CD4-positive, alpha-beta memory T cell (primary cell): ENCODE measurements at regions of chr14 and their contacts with region 1.

Region 1: GRCh38 chr14:24114536-24115450 is at the starts of genes DCAF11 and NRL:
- DNase-seq: peak; percentile 100
- H3K4me3 ChIP-seq: peak within 1 kb of the TSS; percentile 97 to 98
- H3K4me3 Mint-ChIP-seq: peak within 1 kb of the TSS; percentile 95 to 99 (median 98)
- H3K27ac ChIP-seq: peak within 1 kb of the TSS; percentile 98
- H3K27ac Mint-ChIP-seq: peak within 1 kb of the TSS; percentile 98 to 100 (median 99)
- H3K4me1 ChIP-seq: peaks cover 29% of the 10 kb centered on the region
- H3K4me1 Mint-ChIP-seq: peaks cover 19 to 44% (median 30%) of the 10 kb centered on the region in 4 donors
- H3K27me3 ChIP-seq: no peaks in the 10 kb centered on the region
- H3K27me3 Mint-ChIP-seq: no peaks in the 10 kb centered on the region
- total RNA-seq, gene DCAF11: 71.5 to 75.8 TPM
- total RNA-seq, gene NRL: 2.9 to 4.5 TPM

Region 2: GRCh38 chr14:24051789-24052655 is 62.8 kb before region 1 on chr14 and contains the start of gene CARMIL3:
- CTCF ChIA-PET with region 1: interaction called, 392 read pairs
- POLR2A ChIA-PET with region 1: interaction called, 21 read pairs
- intact Hi-C with region 1: no loop called
- DNase-seq: peak; percentile 50 to 58 (median 53)
- H3K4me3 ChIP-seq: peak within 1 kb of the TSS in 1 of 2 donors; percentile 76
- H3K4me3 Mint-ChIP-seq: peak within 1 kb of the TSS; percentile 83 to 92 (median 88)
- H3K27ac ChIP-seq: peak within 1 kb of the TSS; percentile 16
- H3K27ac Mint-ChIP-seq: peak within 1 kb of the TSS in 5 of 7 donors; percentile 14 to 81 (median 68)
- H3K4me1 ChIP-seq: peaks cover 14% of the 10 kb centered on the region
- H3K4me1 Mint-ChIP-seq: peaks cover 10 to 17% (median 14%) of the 10 kb centered on the region in 4 donors
- H3K27me3 ChIP-seq: no peaks in the 10 kb centered on the region
- H3K27me3 Mint-ChIP-seq: peaks cover 6 to 8% of the 10 kb centered on the region in 2 donors
- total RNA-seq, gene CARMIL3: 0.15 to 0.22 TPM

Region 3: GRCh38 chr14:24093901-24094761 is 20.7 kb before region 1 on chr14 and contains the start of gene PCK2:
- CTCF ChIA-PET with region 1: interaction called, 412 read pairs
- POLR2A ChIA-PET with region 1: interaction called, 137 read pairs
- intact Hi-C with region 1: loop called (anchors 1 kb)
- DNase-seq: peak; percentile 53 to 75 (median 61)
- H3K4me3 ChIP-seq: peak within 1 kb of the TSS; percentile 82 to 90
- H3K4me3 Mint-ChIP-seq: peak within 1 kb of the TSS; percentile 91 to 100 (median 98)
- H3K27ac ChIP-seq: peak within 1 kb of the TSS; percentile 84
- H3K27ac Mint-ChIP-seq: peak within 1 kb of the TSS; percentile 84 to 98 (median 97)
- H3K4me1 ChIP-seq: peaks cover 26% of the 10 kb centered on the region
- H3K4me1 Mint-ChIP-seq: peaks cover 21 to 47% (median 33%) of the 10 kb centered on the region in 4 donors
- H3K27me3 ChIP-seq: no peaks in the 10 kb centered on the region
- H3K27me3 Mint-ChIP-seq: no peaks in the 10 kb centered on the region
- total RNA-seq, gene PCK2: 18.3 to 21.4 TPM

Region 4: DNA sequence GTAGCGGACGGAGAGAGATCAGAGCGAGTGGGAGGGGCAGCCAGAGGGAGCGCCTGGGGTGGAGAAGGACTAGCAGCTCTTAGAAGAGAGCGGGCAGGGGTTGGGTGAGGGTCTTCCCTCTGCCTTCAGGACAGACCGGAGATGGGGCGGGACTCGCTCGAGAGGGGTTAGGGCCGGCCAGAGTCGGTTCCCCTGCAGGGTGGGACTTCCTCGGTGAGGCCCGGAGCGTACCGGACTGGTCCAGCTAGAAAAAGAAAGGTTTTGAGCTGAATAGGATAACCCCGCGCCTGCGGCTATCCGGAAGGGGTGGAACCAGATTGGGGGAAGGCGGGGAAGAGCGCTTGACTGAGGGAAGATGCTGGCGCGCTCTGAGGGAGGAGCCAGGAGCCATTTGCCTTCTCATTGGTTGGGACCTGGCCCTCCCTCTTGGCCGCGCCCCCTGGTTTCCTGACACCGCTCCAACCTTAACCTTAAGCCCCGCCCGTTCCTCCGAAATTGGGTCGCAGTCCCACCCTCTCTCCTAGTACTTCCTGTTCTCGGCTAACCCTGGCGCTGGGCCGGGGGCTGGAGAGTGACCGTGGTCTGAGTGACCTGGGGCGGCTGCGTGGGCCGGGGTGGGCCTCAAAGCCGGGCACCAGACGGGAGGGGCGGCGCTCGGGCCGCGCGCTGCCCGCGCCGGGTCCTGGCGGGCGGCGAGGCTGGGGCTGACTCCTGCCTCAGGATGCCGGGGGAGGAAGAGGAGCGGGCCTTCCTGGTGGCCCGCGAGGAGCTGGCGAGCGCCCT is 32.4 kb after region 1 on chr14 and contains the start of gene RNF31:
- CTCF ChIA-PET with region 1: interaction called, 36 read pairs
- POLR2A ChIA-PET with region 1: interaction called, 104 read pairs
- intact Hi-C with region 1: loop called (anchors 1 kb)
- DNase-seq: peak; percentile 95 to 99 (median 97)
- H3K4me3 ChIP-seq: peak within 1 kb of the TSS; percentile 85 to 99
- H3K4me3 Mint-ChIP-seq: peak within 1 kb of the TSS; percentile 97 to 100 (median 98)
- H3K27ac ChIP-seq: peak within 1 kb of the TSS; percentile 92
- H3K27ac Mint-ChIP-seq: peak within 1 kb of the TSS; percentile 95 to 99 (median 98)
- H3K4me1 ChIP-seq: peaks cover 63% of the 10 kb centered on the region
- H3K4me1 Mint-ChIP-seq: peaks cover 32 to 80% (median 54%) of the 10 kb centered on the region in 4 donors
- H3K27me3 ChIP-seq: no peaks in the 10 kb centered on the region
- H3K27me3 Mint-ChIP-seq: no peaks in the 10 kb centered on the region
- total RNA-seq, gene RNF31: 108 to 113 TPM

Region 5: DNA sequence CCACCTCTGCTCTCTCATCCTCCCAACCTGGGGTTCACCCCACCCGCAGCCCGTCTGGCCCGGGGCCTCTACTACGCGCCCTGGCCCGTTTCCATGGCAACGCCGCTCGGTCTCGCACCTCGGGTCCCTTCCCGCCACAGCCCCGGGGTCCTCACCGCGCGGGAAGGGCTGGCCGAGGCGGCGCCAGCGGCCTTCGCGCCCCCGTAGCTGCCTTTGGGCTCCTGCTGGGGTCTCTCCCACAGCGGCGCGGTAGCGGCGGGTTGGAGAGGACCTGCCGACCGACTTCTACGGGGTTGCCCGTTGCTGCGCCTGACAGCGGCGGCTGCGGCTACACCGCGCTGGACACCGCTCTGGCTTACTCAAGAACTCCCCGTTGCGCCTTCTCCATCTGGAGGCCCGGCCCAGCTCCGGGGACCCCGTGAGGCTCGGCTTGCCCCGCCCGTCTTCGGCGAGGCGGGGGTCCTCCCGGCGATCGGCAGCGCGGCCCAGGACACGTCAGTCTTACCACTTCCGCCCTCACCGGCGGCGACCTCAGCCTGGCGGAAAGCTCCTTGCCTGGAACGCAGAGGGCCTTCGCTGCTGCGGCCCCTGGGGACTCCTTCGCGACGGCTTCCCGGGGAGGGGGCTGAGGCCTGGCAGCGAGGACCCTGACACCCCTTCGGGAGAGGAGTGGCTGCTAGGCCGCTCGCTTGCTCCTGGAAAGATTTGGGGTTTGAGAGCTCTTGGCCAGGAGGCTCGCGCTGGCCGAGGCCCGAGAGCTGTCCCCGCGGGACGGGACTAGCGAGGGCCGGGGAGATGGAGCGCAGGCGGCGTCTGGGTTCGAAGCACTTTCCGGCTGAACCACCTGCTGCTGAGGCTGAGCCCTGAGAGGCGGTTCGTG is 80.6 kb after region 1 on chr14 and contains the start of gene TM9SF1:
- CTCF ChIA-PET with region 1: no interaction called
- POLR2A ChIA-PET with region 1: interaction called, 42 read pairs
- intact Hi-C with region 1: no loop called
- DNase-seq: peak; percentile 89 to 92 (median 92)
- H3K4me3 ChIP-seq: peak within 1 kb of the TSS; percentile 87 to 90
- H3K4me3 Mint-ChIP-seq: peak within 1 kb of the TSS; percentile 93 to 98 (median 94)
- H3K27ac ChIP-seq: peak within 1 kb of the TSS; percentile 98
- H3K27ac Mint-ChIP-seq: peak within 1 kb of the TSS; percentile 92 to 99 (median 98)
- H3K4me1 ChIP-seq: peaks cover 37% of the 10 kb centered on the region
- H3K4me1 Mint-ChIP-seq: peaks cover 31 to 65% (median 48%) of the 10 kb centered on the region in 4 donors
- H3K27me3 ChIP-seq: no peaks in the 10 kb centered on the region
- H3K27me3 Mint-ChIP-seq: no peaks in the 10 kb centered on the region
- total RNA-seq, gene TM9SF1: 24.1 to 26.3 TPM

Region 6: GRCh38 chr14:24271134-24271833 is 156.5 kb after region 1 on chr14 and contains the start of gene RABGGTA:
- CTCF ChIA-PET with region 1: no interaction called
- POLR2A ChIA-PET with region 1: interaction called, 16 read pairs
- intact Hi-C with region 1: loop called (anchors 1 kb)
- DNase-seq: peak; percentile 95 to 98 (median 97)
- H3K4me3 ChIP-seq: peak within 1 kb of the TSS; percentile 86 to 91
- H3K4me3 Mint-ChIP-seq: peak within 1 kb of the TSS; percentile 90 to 95 (median 91)
- H3K27ac ChIP-seq: peak within 1 kb of the TSS; percentile 94
- H3K27ac Mint-ChIP-seq: peak within 1 kb of the TSS; percentile 91 to 100 (median 99)
- H3K4me1 ChIP-seq: peaks cover 33% of the 10 kb centered on the region
- H3K4me1 Mint-ChIP-seq: peaks cover 24 to 46% (median 39%) of the 10 kb centered on the region in 4 donors
- H3K27me3 ChIP-seq: no peaks in the 10 kb centered on the region
- H3K27me3 Mint-ChIP-seq: no peaks in the 10 kb centered on the region
- total RNA-seq, gene RABGGTA: 55.6 to 62.5 TPM